ENCODE measurements at regions of chr10 and their contacts with region 1.

Region 1: GRCh38 chr10:44386546-44387052 is 1.7 kb upstream of the CXCL12 start:
- DNase-seq: peak; percentile 62
- ATAC-seq: peak; percentile 81
- H3K4me3 ChIP-seq: no peak overlapping the region
- H3K27ac ChIP-seq: no peak overlapping the region
- H3K4me1 ChIP-seq: peaks cover 3% of the 10 kb centered on the region; the same call in 1 of the 2 replicates
- H3K27me3 ChIP-seq: peaks cover 3% of the 10 kb centered on the region; the same call in 1 of the 2 replicates
- CTCF ChIP-seq: peak; percentile 91
- POLR2A ChIP-seq: no peak
- RAD21 ChIP-seq: peak; percentile 95

Region 2: GRCh38 chr10:43671656-43672531 is 714.7 kb before region 1 on chr10:
- CTCF ChIA-PET with region 1: interaction called, 7 read pairs
- POLR2A ChIA-PET with region 1: no interaction called
- dilution Hi-C with region 1: no loop called
- in situ Hi-C with region 1: loop called (anchors 5 kb)
- intact Hi-C with region 1: loop called (anchors 1 kb)
- DNase-seq: peak; percentile 75
- ATAC-seq: peak; percentile 76
- H3K4me3 ChIP-seq: no peak overlapping the region
- H3K27ac ChIP-seq: no peak overlapping the region
- H3K4me1 ChIP-seq: peaks cover 2% of the 10 kb centered on the region; the same call in 1 of the 2 replicates
- H3K27me3 ChIP-seq: no peaks in the 10 kb centered on the region; the same call in 1 of the 2 replicates
- CTCF ChIP-seq: peak; percentile 84
- POLR2A ChIP-seq: no peak
- RAD21 ChIP-seq: peak; percentile 96

Region 3: DNA sequence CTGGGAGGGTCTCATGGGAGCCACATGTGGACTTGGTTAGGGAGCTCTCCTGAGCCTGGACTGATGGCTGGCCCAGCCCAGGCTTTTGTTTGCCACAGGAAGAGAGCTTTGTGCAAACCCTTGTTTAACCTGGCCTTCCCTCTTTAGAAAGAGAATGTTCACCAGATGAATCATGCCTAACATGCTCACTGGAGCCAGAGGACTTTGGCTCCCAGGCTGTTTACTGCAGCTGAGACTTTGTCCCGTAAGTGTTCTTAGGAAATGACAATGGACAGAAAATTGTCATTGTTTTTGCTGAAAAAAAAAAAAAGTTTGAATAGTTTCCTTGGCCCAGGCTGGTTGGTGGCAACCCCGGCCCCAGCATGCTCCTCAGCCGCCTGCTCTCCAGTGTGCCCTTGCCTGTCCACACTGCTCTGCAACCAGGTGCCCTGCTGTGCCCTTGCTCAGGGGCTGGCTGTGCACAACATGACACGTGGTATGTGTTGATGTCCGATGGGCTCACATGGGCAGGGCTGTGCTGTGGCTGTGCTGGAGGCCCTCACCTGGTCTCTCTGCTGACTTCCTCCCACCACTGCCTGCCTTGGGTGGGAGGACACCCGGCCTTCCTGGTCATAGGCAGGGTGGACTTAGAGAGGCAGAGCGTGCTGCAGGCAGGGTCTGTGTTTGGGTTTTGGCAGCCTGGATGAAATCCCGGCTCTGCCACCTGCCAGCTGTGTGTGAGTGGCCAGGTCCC is 522.6 kb before region 1 on chr10:
- CTCF ChIA-PET with region 1: no interaction called
- POLR2A ChIA-PET with region 1: no interaction called
- dilution Hi-C with region 1: no loop called
- in situ Hi-C with region 1: no loop called
- intact Hi-C with region 1: loop called (anchors 10 kb)
- DNase-seq: peak; percentile 85
- ATAC-seq: peak; percentile 56
- H3K4me3 ChIP-seq: no peak overlapping the region
- H3K27ac ChIP-seq: peak overlapping the region; percentile 91
- H3K4me1 ChIP-seq: peaks cover 34% of the 10 kb centered on the region
- H3K27me3 ChIP-seq: no peaks in the 10 kb centered on the region
- CTCF ChIP-seq: no peak
- POLR2A ChIP-seq: no peak
- RAD21 ChIP-seq: no peak

Region 4: GRCh38 chr10:44071479-44071878 is 315.1 kb before region 1 on chr10:
- CTCF ChIA-PET with region 1: no interaction called
- POLR2A ChIA-PET with region 1: no interaction called
- dilution Hi-C with region 1: no loop called
- in situ Hi-C with region 1: no loop called
- intact Hi-C with region 1: loop called (anchors 1 kb)
- DNase-seq: peak; percentile 90
- ATAC-seq: peak; percentile 84
- H3K4me3 ChIP-seq: no peak overlapping the region
- H3K27ac ChIP-seq: no peak overlapping the region
- H3K4me1 ChIP-seq: no peaks in the 10 kb centered on the region; the same call in 1 of the 2 replicates
- H3K27me3 ChIP-seq: peaks cover 4% of the 10 kb centered on the region; the same call in 1 of the 2 replicates
- CTCF ChIP-seq: no peak; the same call in 1 of the 2 replicates
- POLR2A ChIP-seq: no peak
- RAD21 ChIP-seq: no peak

Region 5: DNA sequence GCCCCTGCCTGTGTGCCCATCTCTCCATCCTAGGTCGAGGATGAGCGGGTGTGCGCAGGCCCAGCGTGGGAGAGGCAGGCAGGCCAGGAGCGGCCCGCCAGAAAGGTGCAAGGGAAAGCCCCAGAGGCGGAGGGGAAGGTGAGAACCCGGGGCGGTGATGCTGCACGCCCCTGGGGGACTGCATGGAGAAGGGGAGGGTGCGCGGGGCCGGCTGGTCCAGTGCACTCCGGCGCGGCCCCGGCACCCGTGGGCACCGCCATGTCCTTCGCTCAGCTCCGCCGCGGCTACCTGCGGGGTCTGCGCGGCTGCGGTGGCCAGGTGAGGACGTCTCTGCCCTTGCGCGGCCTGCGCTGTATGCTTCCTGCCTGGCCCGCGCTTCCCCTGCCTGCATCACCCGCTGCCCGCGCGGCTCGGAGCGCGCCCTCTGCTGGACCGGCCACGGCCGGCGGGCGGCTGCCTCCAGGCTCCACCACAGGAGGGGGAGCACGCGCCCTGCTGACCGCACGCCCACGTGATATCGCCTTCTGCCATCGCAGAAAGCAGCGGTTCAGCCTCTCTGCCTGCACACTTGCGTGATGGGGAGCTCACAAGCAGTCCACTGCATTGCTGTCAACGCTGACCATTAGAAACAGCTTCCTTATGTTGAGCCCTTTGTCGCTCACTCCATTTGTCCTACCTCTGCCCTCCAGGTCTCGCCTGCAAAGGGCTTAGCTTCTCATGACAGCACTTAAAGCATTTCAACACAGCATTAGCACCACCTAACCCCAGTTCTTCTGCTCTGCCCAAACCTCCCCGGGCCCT is 75.6 kb before region 1 on chr10:
- CTCF ChIA-PET with region 1: interaction called, 3 read pairs
- POLR2A ChIA-PET with region 1: no interaction called
- dilution Hi-C with region 1: no loop called
- in situ Hi-C with region 1: no loop called
- intact Hi-C with region 1: loop called (anchors 1 kb)
- DNase-seq: peak; percentile 79
- ATAC-seq: peak; percentile 100
- H3K4me3 ChIP-seq: no peak overlapping the region
- H3K27ac ChIP-seq: no peak overlapping the region
- H3K4me1 ChIP-seq: peaks cover 6% of the 10 kb centered on the region
- H3K27me3 ChIP-seq: peaks cover 1% of the 10 kb centered on the region
- CTCF ChIP-seq: peak; percentile 98
- POLR2A ChIP-seq: no peak
- RAD21 ChIP-seq: peak; percentile 88

Region 6: DNA sequence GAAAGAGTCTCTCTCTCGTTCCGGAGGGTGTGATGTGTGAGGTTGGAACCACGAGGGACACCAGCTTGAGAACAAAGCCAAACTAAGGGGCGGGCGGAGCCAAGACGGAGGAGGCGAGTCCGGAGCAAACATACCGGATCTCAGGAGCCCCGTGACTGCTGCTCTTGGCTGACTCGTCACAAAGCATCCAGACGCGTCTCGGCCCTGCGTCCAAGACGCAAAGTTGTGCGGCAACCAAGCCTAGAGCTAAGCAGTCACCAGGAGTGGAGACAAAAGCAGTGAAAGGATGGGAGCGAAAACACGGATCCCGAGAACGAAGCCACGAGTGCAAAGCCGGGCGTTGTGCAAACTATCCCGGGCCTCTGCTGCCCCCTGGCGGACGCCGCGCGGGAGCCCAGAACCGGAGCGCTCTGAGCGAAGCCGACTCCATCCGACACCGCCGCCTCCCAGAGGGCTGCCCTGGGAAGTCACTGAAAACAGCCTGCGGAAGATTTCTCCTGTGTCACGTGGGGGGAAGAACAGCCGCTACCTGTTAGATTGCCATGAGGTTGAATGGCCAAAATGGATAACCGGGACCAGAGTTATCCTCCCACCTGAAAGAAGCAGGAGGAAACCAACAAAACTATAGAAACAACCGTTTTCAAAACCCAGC is 478.2 kb after region 1 on chr10:
- CTCF ChIA-PET with region 1: interaction called, 4 read pairs
- POLR2A ChIA-PET with region 1: no interaction called
- dilution Hi-C with region 1: no loop called
- in situ Hi-C with region 1: loop called (anchors 5 kb)
- intact Hi-C with region 1: loop called (anchors 2 kb)
- DNase-seq: peak; percentile 75
- ATAC-seq: peak; percentile 94
- H3K4me3 ChIP-seq: peak overlapping the region; percentile 68
- H3K27ac ChIP-seq: peak overlapping the region; percentile 65
- H3K4me1 ChIP-seq: peaks cover 4% of the 10 kb centered on the region; the same call in 1 of the 2 replicates
- H3K27me3 ChIP-seq: peaks cover 3% of the 10 kb centered on the region; the same call in 1 of the 2 replicates
- CTCF ChIP-seq: peak; percentile 98
- POLR2A ChIP-seq: no peak
- RAD21 ChIP-seq: peak; percentile 94